Astrocyte of the spinal cord (primary cell): ENCODE measurements at regions of chr1 and their contacts with region 1.

Region 1: DNA sequence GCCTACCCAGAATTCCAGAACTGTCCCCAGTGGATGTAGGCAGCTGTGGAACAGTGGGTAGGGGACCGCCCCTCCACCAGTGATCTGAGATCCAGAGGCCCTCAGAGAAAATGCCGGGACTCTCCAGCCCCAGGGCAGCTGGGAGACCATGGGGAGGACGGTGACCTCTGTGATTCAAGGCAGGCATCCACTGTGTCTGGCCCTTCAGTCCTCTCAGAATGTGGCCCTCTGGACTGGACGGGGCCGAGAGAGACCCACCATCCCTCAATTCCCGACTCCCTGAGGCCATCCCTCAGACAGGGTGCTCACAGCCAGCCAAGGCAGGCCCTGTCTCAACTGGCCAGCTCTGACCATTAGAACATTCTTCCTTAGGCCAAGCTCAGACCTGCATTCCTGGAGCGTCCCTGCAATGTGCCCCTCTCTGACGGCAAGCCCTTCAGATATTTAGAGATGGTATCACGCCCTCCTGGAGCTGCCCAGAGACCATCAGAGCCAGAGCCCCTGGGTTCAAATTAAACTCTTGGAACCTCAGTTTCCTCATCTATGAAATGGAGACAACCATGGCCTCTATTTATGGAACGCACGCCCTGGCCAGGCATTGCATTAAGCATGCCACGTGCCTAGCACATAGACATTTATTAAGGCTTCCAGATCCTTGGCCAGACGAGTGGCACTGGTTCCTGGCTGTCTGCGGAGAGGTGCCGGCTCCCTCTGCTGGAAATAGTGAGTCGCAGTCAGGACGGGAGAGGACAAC is 9.6 kb upstream of the EPS8L3 start:
- DNase-seq: peak; percentile 83
- H3K4me3 ChIP-seq: no peak overlapping the region
- CTCF ChIP-seq: peak; percentile 94

Region 2: GRCh38 chr1:109643385-109644230 is 129.7 kb before region 1 on chr1:
- in situ Hi-C with region 1: loop called (anchors 10 kb)
- DNase-seq: peak; percentile 64
- H3K4me3 ChIP-seq: no peak overlapping the region
- CTCF ChIP-seq: peak; percentile 91

Region 3: GRCh38 chr1:109910123-109910962 is 137.0 kb after region 1 on chr1 and contains the start of gene CSF1:
- in situ Hi-C with region 1: loop called (anchors 25 kb)
- DNase-seq: peak; percentile 88
- H3K4me3 ChIP-seq: peak within 1 kb of the TSS; percentile 83
- CTCF ChIP-seq: no peak